Activated CD4-positive, alpha-beta memory T cell treated with anti-CD3 and anti-CD28 coated beads, Interleukin-2, amount 10 ng/mL, durations not matched to agents 7 days and 5 days (primary cell): ENCODE measurements at regions of chr7 and their contacts with region 1.

Region 1: GRCh38 chr7:99472561-99473243 is at the start of gene ZNF789:
- DNase-seq: peak; percentile 99
- H3K4me3 Mint-ChIP-seq: peak within 1 kb of the TSS; percentile 93
- H3K27ac Mint-ChIP-seq: peak within 1 kb of the TSS; percentile 88
- H3K4me1 Mint-ChIP-seq: peaks cover 39% of the 10 kb centered on the region
- H3K27me3 Mint-ChIP-seq: peaks cover 4% of the 10 kb centered on the region
- total RNA-seq, gene ZNF789: 19.4 to 21.8 TPM

Region 2: DNA sequence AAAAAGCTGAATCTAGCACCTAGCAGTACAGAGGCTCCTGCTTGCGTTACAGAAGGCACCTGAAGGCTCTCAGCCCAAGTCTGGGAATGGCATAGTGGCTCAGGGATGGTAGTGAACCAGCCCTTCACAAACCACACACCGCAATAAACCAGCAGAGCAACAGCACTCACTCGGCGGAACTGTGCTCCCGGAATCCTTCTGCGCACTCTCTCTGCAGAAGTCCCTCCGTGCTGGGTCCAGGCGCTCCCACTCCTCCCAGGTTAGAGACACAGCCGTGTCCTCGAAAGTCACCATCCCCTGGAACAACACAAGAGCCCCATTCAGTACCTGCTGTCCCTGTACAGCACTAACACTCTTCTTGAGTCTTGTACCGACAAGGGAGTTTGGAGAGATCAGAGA is 25.8 kb after region 1 on chr7:
- CTCF ChIA-PET with region 1: interaction called, 7 read pairs
- POLR2A ChIA-PET with region 1: interaction called, 23 read pairs
- DNase-seq: no peak
- H3K4me3 Mint-ChIP-seq: peak overlapping the region; percentile 92
- H3K27ac Mint-ChIP-seq: peak overlapping the region; percentile 98
- H3K4me1 Mint-ChIP-seq: peaks cover 26% of the 10 kb centered on the region
- H3K27me3 Mint-ChIP-seq: no peaks in the 10 kb centered on the region

Region 3: DNA sequence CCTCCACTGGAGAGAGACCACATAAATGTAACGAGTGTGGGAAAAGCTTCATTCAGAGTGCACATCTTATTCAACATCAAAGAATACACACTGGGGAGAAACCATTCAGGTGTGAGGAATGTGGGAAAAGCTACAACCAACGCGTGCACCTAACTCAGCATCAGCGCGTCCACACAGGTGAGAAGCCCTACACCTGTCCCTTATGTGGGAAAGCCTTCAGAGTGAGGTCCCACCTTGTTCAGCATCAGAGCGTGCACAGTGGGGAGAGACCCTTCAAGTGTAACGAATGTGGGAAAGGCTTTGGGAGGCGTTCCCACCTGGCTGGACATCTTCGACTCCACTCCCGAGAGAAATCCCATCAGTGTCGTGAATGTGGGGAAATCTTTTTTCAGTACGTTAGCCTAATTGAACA is 58.7 kb after region 1 on chr7:
- CTCF ChIA-PET with region 1: no interaction called
- POLR2A ChIA-PET with region 1: no interaction called
- DNase-seq: no peak
- H3K4me3 Mint-ChIP-seq: no peak overlapping the region
- H3K27ac Mint-ChIP-seq: no peak overlapping the region
- H3K4me1 Mint-ChIP-seq: no peaks in the 10 kb centered on the region
- H3K27me3 Mint-ChIP-seq: no peaks in the 10 kb centered on the region